ENCODE measurements at regions of chr4 and their contacts with region 1.

Region 1: DNA sequence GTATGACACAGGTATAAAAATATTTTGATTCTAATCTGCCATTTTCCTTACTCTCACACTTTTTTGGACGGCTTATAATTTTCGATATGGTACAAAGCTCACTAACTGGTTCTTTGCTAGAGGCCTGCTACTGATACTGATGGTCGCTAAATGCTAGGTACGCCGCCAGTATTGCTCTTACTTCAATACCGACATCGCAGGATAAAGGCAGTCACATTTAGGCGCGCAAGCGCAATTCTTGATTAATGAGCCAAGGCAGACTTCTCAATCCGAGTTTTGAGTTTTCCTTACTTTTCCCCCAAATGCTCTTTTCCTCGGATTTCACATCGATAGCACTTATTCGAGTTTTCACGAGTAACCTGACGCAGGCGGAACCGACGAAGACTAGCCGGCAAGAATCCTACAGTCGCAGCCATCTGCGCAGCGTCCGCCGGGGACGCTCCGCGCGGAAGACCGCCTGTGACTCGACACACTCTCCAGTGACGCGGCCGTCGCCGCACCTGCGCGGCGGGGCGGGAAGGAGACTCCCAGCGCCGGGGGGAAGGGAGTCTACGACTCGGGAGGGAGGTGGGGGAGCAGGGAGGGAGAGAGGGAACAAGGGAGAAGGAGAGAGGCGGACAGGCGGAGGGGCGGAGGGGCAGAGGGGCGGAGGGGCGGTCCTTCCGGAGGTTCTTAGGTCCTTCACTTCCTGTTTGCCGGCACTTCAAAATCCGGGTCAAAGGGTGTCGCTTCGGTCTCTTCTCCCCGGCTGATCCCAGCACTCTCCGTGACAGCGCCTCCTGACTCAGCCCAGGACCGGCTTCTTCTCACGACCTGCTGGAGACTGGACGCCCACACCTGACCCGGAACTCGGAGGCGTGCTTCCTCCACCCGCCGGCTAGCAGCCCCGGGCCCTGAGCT is at the start of gene USP38:
- DNase-seq: peak; percentile 76 to 93
- ATAC-seq: peak; percentile 84 to 95 (median 88)
- H3K4me3 ChIP-seq: peak within 1 kb of the TSS; percentile 62
- H3K4me3 Mint-ChIP-seq: peak within 1 kb of the TSS; percentile 99
- H3K27ac ChIP-seq: peak within 1 kb of the TSS; percentile 84
- H3K27ac Mint-ChIP-seq: peak within 1 kb of the TSS; percentile 96 to 99
- H3K4me1 ChIP-seq: peaks cover 8% of the 10 kb centered on the region
- H3K4me1 Mint-ChIP-seq: peaks cover 52 to 53% of the 10 kb centered on the region in 2 donors
- H3K27me3 ChIP-seq: no peaks in the 10 kb centered on the region
- H3K27me3 Mint-ChIP-seq: no peaks in the 10 kb centered on the region
- CTCF ChIP-seq: no peak
- total RNA-seq, gene USP38: 35.6 to 39.5 (median 36.7) TPM

Region 2: DNA sequence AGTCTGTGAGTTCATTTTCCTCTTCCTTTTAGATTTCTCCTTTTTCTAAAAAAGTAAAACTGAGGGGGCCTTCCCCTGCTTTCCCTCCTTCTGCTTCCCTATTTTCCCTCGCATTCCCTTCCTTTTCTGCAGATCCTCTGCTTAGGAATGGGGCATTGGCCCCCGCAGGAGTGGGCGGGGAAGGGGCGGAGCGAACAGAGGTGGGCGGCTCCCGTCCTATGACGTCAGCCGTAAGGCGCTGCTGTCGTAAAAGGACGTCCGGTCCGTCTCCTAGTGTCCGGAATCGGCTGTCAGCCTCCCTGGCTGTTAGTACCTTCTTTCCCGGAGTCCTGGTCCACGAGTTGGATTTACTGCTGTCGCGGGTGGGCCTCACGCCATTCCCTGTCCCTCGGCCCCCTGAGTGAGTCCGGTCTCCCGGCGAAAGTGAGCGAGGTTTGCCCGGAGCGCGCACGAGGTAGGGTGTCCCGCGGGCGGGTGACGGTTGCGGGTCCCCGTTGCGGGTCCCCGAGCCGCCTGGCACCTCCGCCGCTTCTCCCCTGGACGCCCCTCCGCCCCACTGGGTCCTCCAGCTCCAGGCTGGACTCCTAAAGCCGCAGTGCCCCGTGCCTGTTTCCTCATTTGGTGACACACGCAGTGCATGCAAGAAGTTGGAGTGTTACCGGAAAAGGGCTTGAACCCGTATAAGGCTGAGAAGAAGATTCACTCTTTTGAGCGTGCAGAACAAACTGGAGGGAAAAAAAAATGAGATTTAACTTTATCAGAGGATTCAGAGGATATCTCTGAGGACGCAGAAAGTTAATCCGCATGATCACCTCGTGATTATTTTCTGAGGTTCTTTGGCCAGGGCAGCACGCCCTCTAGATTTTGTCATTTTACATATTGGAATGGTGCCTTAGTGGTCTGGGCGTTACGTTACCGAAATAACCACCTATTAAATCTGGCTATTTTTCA is 1963.5 kb before region 1 on chr4 and contains the start of gene ZNF330:
- intact Hi-C with region 1: loop called (anchors 10 kb)
- DNase-seq: peak; percentile 93 to 94
- ATAC-seq: peak; percentile 89 to 95 (median 91)
- H3K4me3 ChIP-seq: peak within 1 kb of the TSS; percentile 64
- H3K4me3 Mint-ChIP-seq: peak within 1 kb of the TSS; percentile 98
- H3K27ac ChIP-seq: peak within 1 kb of the TSS; percentile 75
- H3K27ac Mint-ChIP-seq: peak within 1 kb of the TSS; percentile 92 to 93
- H3K4me1 ChIP-seq: peaks cover 8% of the 10 kb centered on the region
- H3K4me1 Mint-ChIP-seq: peaks cover 27 to 40% of the 10 kb centered on the region in 2 donors
- H3K27me3 ChIP-seq: no peaks in the 10 kb centered on the region
- H3K27me3 Mint-ChIP-seq: peaks cover 6 to 18% of the 10 kb centered on the region in 2 donors
- CTCF ChIP-seq: no peak
- total RNA-seq, gene ZNF330: 25.3 to 34.8 (median 34.7) TPM

Region 3: DNA sequence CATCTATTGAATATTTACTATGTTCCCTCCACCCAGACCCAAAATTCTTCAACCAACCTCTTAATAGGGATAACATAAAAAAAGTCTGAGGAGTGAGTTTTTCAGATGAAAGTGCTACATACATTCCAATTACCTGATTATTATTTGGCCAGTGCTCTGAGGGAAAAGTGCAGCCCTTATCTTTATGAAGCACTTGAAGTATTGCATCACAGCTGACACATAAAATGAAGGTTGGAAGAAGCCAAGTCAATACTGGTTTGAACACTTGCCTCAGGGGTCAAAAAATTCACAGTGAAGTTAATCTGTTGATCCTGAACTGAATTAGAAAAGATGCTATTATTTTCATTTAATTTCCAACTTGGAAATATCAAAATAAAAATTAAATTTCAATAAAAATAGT is 837.2 kb before region 1 on chr4:
- intact Hi-C with region 1: no loop called
- DNase-seq: no peak
- ATAC-seq: no peak
- H3K4me3 ChIP-seq: no peak overlapping the region
- H3K4me3 Mint-ChIP-seq: no peak overlapping the region
- H3K27ac ChIP-seq: no peak overlapping the region
- H3K27ac Mint-ChIP-seq: no peak overlapping the region
- H3K4me1 ChIP-seq: no peaks in the 10 kb centered on the region
- H3K4me1 Mint-ChIP-seq: no peaks in the 10 kb centered on the region
- H3K27me3 ChIP-seq: no peaks in the 10 kb centered on the region
- H3K27me3 Mint-ChIP-seq: no peaks in the 10 kb centered on the region
- CTCF ChIP-seq: no peak

Region 4: GRCh38 chr4:143046454-143046853 is 138.0 kb before region 1 on chr4:
- intact Hi-C with region 1: no loop called
- DNase-seq: no peak
- ATAC-seq: no peak
- H3K4me3 ChIP-seq: no peak overlapping the region
- H3K4me3 Mint-ChIP-seq: no peak overlapping the region
- H3K27ac ChIP-seq: no peak overlapping the region
- H3K27ac Mint-ChIP-seq: no peak overlapping the region
- H3K4me1 ChIP-seq: no peaks in the 10 kb centered on the region
- H3K4me1 Mint-ChIP-seq: no peaks in the 10 kb centered on the region
- H3K27me3 ChIP-seq: no peaks in the 10 kb centered on the region
- H3K27me3 Mint-ChIP-seq: no peaks in the 10 kb centered on the region
- CTCF ChIP-seq: no peak

Region 5: DNA sequence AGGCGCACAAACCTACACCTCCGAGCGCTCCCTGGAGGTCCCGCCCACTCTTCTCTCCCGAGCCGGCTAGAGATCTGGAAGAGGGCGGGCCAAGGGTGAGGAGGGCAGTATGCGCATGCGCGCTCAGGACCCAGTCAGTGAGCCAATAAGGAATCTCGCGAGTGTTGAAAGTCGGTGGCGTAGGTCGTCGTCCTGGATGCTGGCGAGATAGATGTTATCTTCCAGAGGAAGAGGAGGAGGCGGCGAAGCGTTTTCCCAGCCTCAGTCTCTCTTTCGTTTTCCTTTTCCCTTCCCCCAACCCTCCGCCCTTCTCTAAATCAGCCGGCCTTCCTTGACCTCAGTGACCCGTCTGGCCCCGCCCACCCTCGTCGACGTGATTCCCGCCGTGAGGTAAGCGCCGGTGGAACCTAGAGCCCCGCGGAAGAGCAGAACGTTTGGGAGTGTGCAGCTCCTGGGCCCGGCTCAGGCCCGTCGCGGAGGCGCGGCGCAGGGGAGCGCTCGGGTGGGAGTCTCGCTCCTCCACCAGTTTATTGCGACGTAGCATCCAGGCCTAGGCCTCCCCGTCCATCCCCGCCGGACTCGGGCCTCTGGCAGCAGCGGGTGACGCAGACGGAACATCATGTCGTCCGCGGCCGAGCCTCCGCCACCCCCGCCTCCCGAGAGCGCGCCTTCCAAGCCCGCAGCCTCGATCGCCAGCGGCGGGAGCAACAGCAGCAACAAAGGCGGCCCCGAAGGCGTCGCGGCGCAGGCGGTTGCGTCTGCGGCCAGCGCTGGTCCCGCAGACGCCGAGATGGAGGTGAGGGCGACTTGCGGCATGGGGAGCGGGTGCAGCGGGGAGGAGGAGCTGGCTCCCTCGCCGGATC is 329.1 kb after region 1 on chr4 and contains the start of gene SMARCA5:
- intact Hi-C with region 1: loop called (anchors 1 kb)
- DNase-seq: peak; percentile 93 to 100
- ATAC-seq: peak; percentile 82 to 94 (median 83)
- H3K4me3 ChIP-seq: peak within 1 kb of the TSS; percentile 94
- H3K4me3 Mint-ChIP-seq: peak within 1 kb of the TSS; percentile 95
- H3K27ac ChIP-seq: peak within 1 kb of the TSS; percentile 99
- H3K27ac Mint-ChIP-seq: peak within 1 kb of the TSS; percentile 96 to 98
- H3K4me1 ChIP-seq: peaks cover 8% of the 10 kb centered on the region
- H3K4me1 Mint-ChIP-seq: peaks cover 37 to 39% of the 10 kb centered on the region in 2 donors
- H3K27me3 ChIP-seq: no peaks in the 10 kb centered on the region
- H3K27me3 Mint-ChIP-seq: no peaks in the 10 kb centered on the region
- CTCF ChIP-seq: no peak
- total RNA-seq, gene SMARCA5: 42.5 to 53.8 (median 45.8) TPM

Region 6: GRCh38 chr4:145097821-145098674 is 1913.6 kb after region 1 on chr4 and contains the starts of genes ABCE1 and ANAPC10:
- intact Hi-C with region 1: loop called (anchors 2 kb)
- DNase-seq: peak; percentile 90 to 99
- ATAC-seq: peak; percentile 88 to 96 (median 94)
- H3K4me3 ChIP-seq: peak within 1 kb of the TSS; percentile 83
- H3K4me3 Mint-ChIP-seq: peak within 1 kb of the TSS; percentile 92
- H3K27ac ChIP-seq: peak within 1 kb of the TSS; percentile 84
- H3K27ac Mint-ChIP-seq: peak within 1 kb of the TSS; percentile 92 to 95
- H3K4me1 ChIP-seq: peaks cover 19% of the 10 kb centered on the region
- H3K4me1 Mint-ChIP-seq: peaks cover 25 to 43% of the 10 kb centered on the region in 2 donors
- H3K27me3 ChIP-seq: no peaks in the 10 kb centered on the region
- H3K27me3 Mint-ChIP-seq: no peaks in the 10 kb centered on the region
- CTCF ChIP-seq: no peak
- total RNA-seq, gene ABCE1: 25.8 to 33.8 (median 31.7) TPM
- total RNA-seq, gene ANAPC10: 27.9 to 37.7 (median 37.7) TPM